Naive thymus-derived CD4-positive, alpha-beta T cell (primary cell): ENCODE measurements at regions of chr10 and their contacts with region 1.

Region 1: GRCh38 chr10:60816628-60817397 is 38.5 kb downstream of the CDK1 start:
- DNase-seq: peak in 7 of 9 donors; percentile 12 to 63 (median 40)
- ATAC-seq: peak; percentile 83
- H3K4me3 ChIP-seq: no peak overlapping the region
- H3K4me3 Mint-ChIP-seq: no peak overlapping the region
- H3K27ac ChIP-seq: no peak overlapping the region
- H3K27ac Mint-ChIP-seq: no peak overlapping the region
- H3K4me1 ChIP-seq: no peaks in the 10 kb centered on the region
- H3K4me1 Mint-ChIP-seq: peaks cover 0 to 9% (median 5%) of the 10 kb centered on the region in 7 donors
- H3K27me3 ChIP-seq: no peaks in the 10 kb centered on the region
- H3K27me3 Mint-ChIP-seq: peaks cover 0 to 26% (median 0%) of the 10 kb centered on the region in 5 donors

Region 2: GRCh38 chr10:61140765-61141392 is 324.1 kb after region 1 on chr10:
- CTCF ChIA-PET with region 1: no interaction called
- POLR2A ChIA-PET with region 1: no interaction called
- intact Hi-C with region 1: loop called in 1 of 2 experiments (anchors 5 kb)
- DNase-seq: peak in 4 of 9 donors; percentile 9 to 38 (median 13)
- ATAC-seq: peak; percentile 54
- H3K4me3 ChIP-seq: no peak overlapping the region
- H3K4me3 Mint-ChIP-seq: no peak overlapping the region
- H3K27ac ChIP-seq: no peak overlapping the region
- H3K27ac Mint-ChIP-seq: no peak overlapping the region
- H3K4me1 ChIP-seq: no peaks in the 10 kb centered on the region
- H3K4me1 Mint-ChIP-seq: peaks cover 0 to 2% (median 0%) of the 10 kb centered on the region in 7 donors
- H3K27me3 ChIP-seq: no peaks in the 10 kb centered on the region
- H3K27me3 Mint-ChIP-seq: peaks cover 0 to 18% (median 9%) of the 10 kb centered on the region in 5 donors

Region 3: GRCh38 chr10:61592581-61592980 is 775.8 kb after region 1 on chr10:
- CTCF ChIA-PET with region 1: no interaction called
- POLR2A ChIA-PET with region 1: no interaction called
- intact Hi-C with region 1: loop called in 1 of 2 experiments (anchors 2 kb)
- DNase-seq: no peak
- ATAC-seq: no peak
- H3K4me3 ChIP-seq: no peak overlapping the region
- H3K4me3 Mint-ChIP-seq: no peak overlapping the region
- H3K27ac ChIP-seq: no peak overlapping the region
- H3K27ac Mint-ChIP-seq: no peak overlapping the region
- H3K4me1 ChIP-seq: no peaks in the 10 kb centered on the region
- H3K4me1 Mint-ChIP-seq: no peaks in the 10 kb centered on the region
- H3K27me3 ChIP-seq: peaks cover 0 to 3% of the 10 kb centered on the region in 2 donors
- H3K27me3 Mint-ChIP-seq: peaks cover 0 to 27% (median 6%) of the 10 kb centered on the region in 5 donors

Region 4: GRCh38 chr10:61621605-61622060 is 804.8 kb after region 1 on chr10:
- CTCF ChIA-PET with region 1: no interaction called
- POLR2A ChIA-PET with region 1: no interaction called
- intact Hi-C with region 1: no loop called
- DNase-seq: no peak
- ATAC-seq: no peak
- H3K4me3 ChIP-seq: no peak overlapping the region
- H3K4me3 Mint-ChIP-seq: no peak overlapping the region
- H3K27ac ChIP-seq: no peak overlapping the region
- H3K27ac Mint-ChIP-seq: no peak overlapping the region
- H3K4me1 ChIP-seq: no peaks in the 10 kb centered on the region
- H3K4me1 Mint-ChIP-seq: peaks cover 0 to 6% (median 0%) of the 10 kb centered on the region in 7 donors
- H3K27me3 ChIP-seq: no peaks in the 10 kb centered on the region
- H3K27me3 Mint-ChIP-seq: peaks cover 14 to 29% (median 23%) of the 10 kb centered on the region in 5 donors

Region 5: DNA sequence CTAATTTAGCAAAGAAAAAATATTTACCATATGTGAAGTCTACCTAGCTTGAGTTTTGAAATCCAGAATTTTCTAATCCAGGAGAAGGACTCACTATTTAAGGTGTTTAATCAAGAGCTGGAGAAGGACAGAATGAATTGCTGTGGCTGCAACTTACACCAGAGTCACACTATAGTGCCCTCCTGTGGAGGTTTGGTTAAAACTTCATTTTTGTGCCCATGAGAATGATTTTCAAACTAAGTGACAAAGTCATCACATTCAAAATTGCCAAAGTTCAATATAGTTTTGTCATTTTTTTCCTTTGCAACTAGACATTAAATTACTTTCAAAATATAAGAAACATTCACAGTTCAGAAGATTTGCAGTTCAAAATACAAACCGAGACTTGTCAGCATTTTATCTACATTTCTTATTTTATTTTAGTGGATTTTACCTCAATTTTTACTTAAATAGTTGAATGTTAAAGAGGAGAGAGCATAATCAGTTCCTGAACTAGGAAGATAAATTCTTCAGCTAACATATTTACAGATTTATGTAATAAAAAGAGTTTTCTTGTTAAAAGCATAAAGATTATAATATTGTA is 916.6 kb after region 1 on chr10:
- CTCF ChIA-PET with region 1: no interaction called
- POLR2A ChIA-PET with region 1: no interaction called
- intact Hi-C with region 1: loop called (anchors 2 to 5 kb)
- DNase-seq: peak in 2 of 9 donors; percentile 19 to 24
- ATAC-seq: no peak
- H3K4me3 ChIP-seq: no peak overlapping the region
- H3K4me3 Mint-ChIP-seq: no peak overlapping the region
- H3K27ac ChIP-seq: no peak overlapping the region
- H3K27ac Mint-ChIP-seq: no peak overlapping the region
- H3K4me1 ChIP-seq: no peaks in the 10 kb centered on the region
- H3K4me1 Mint-ChIP-seq: peaks cover 0 to 1% (median 0%) of the 10 kb centered on the region in 7 donors
- H3K27me3 ChIP-seq: no peaks in the 10 kb centered on the region
- H3K27me3 Mint-ChIP-seq: peaks cover 18 to 70% (median 40%) of the 10 kb centered on the region in 5 donors

Region 6: GRCh38 chr10:61819208-61819607 is 1002.4 kb after region 1 on chr10:
- CTCF ChIA-PET with region 1: no interaction called
- POLR2A ChIA-PET with region 1: no interaction called
- intact Hi-C with region 1: loop called in 1 of 2 experiments (anchors 5 kb)
- DNase-seq: no peak
- ATAC-seq: no peak
- H3K4me3 ChIP-seq: no peak overlapping the region
- H3K4me3 Mint-ChIP-seq: no peak overlapping the region
- H3K27ac ChIP-seq: no peak overlapping the region
- H3K27ac Mint-ChIP-seq: no peak overlapping the region
- H3K4me1 ChIP-seq: no peaks in the 10 kb centered on the region
- H3K4me1 Mint-ChIP-seq: no peaks in the 10 kb centered on the region
- H3K27me3 ChIP-seq: no peaks in the 10 kb centered on the region
- H3K27me3 Mint-ChIP-seq: no peaks in the 10 kb centered on the region

Region 7: DNA sequence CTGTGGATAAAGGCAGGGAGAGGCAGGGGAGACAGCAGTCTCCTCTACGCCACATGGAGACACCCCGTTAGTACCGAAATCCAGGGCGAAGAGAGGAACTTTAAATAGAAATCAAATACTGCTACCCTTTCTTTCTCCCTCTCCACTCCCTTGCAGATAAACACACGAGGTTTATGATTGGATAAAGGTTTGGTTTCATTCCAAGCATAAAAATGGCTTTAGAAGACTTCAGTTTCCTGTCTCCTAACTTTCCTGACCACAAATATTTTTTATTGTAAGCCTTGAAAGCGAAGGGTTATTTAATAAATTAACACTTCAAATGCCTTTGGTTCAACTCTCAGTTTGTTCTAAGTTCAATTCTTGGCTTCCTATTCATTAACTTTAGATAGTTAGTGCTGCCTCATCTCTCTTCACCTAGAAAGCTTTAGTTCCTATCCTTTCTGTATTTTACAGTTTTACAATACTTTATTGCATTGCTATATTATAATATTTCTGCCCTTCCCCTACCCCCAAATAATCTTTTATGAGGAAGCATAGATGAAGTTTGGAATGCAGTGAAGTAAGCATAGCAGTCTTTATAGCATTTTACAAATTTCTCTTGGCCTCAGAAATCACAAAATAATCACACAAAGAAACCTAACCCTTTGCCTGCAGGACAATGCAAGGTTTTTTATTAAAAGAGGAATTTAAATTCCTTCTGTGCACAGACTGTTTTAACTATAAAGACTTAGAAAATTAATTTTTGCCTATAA is 1053.1 kb after region 1 on chr10:
- CTCF ChIA-PET with region 1: no interaction called
- POLR2A ChIA-PET with region 1: no interaction called
- intact Hi-C with region 1: loop called in 1 of 2 experiments (anchors 10 kb)
- DNase-seq: no peak
- ATAC-seq: no peak
- H3K4me3 ChIP-seq: no peak overlapping the region
- H3K4me3 Mint-ChIP-seq: no peak overlapping the region
- H3K27ac ChIP-seq: no peak overlapping the region
- H3K27ac Mint-ChIP-seq: no peak overlapping the region
- H3K4me1 ChIP-seq: no peaks in the 10 kb centered on the region
- H3K4me1 Mint-ChIP-seq: peaks cover 0 to 10% (median 4%) of the 10 kb centered on the region in 7 donors
- H3K27me3 ChIP-seq: peaks cover 0 to 3% of the 10 kb centered on the region in 2 donors
- H3K27me3 Mint-ChIP-seq: peaks cover 0 to 15% (median 3%) of the 10 kb centered on the region in 5 donors